SK-N-SH (cell line): ENCODE measurements at regions of chr7 and their contacts with region 1.

Region 1: DNA sequence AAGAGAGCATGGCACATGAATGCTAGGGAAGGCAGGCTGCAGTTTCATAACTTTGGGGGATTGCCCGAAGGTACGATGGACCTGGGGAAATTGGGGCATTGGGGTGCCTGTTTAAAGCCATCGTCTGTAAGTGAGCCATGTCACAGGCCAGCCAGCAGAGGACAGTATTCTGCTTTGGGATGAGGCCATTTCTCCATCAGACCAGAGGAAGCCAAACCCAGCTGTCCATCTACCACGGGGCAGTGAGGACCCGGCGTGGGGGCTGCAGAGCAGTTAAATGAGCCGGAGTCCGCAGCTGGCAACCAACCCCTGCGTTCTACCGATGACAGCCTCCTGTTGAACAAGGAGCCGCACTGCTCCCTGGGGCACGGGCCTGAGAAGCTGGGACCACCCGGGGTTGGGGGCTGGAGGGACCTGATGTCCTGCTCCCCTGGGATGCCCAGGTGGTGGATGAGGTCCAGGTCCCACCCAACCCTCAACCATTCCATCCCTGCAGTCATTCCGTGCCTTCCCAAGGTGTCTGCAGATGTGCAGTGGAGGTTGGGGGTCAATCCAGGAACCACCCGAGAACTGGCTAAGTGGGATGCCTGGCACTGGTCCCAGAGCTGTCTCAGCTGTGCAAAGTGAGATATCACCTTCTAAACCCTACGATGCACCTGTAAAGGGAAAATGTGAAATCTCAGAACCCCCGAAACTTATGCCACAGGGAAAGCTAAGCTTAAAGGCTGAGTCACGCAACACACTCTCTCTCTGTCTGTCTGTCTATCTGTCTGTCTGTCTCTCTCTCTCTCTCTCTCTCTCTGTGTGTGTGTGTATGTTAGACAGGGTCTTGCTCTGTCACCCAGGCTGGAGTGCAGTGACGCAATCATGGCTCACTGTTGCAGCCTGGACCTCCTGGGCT is 12.1 kb upstream of the RHBDD2 start:
- DNase-seq: peak; percentile 86
- H3K4me3 ChIP-seq: no peak overlapping the region
- H3K27ac ChIP-seq: no peak overlapping the region
- H3K4me1 ChIP-seq: peaks cover 3 to 6% of the 10 kb centered on the region in 2 experiments; a peak in 1 of 4 replicates
- H3K27me3 ChIP-seq: no peaks in the 10 kb centered on the region
- CTCF ChIP-seq: peak; percentile 97
- EP300 ChIP-seq: no peak
- RAD21 ChIP-seq: peak; percentile 97

Region 2: GRCh38 chr7:75842836-75843446 is 23.8 kb before region 1 on chr7:
- CTCF ChIA-PET with region 1: interaction called, 12 read pairs
- POLR2A ChIA-PET with region 1: no interaction called
- DNase-seq: no peak
- H3K4me3 ChIP-seq: no peak overlapping the region
- H3K27ac ChIP-seq: no peak overlapping the region
- H3K4me1 ChIP-seq: peaks cover 2 to 9% of the 10 kb centered on the region in 2 experiments; a peak in 1 of 4 replicates
- H3K27me3 ChIP-seq: peaks cover 12% of the 10 kb centered on the region
- CTCF ChIP-seq: no peak
- EP300 ChIP-seq: no peak
- RAD21 ChIP-seq: no peak

Region 3: DNA sequence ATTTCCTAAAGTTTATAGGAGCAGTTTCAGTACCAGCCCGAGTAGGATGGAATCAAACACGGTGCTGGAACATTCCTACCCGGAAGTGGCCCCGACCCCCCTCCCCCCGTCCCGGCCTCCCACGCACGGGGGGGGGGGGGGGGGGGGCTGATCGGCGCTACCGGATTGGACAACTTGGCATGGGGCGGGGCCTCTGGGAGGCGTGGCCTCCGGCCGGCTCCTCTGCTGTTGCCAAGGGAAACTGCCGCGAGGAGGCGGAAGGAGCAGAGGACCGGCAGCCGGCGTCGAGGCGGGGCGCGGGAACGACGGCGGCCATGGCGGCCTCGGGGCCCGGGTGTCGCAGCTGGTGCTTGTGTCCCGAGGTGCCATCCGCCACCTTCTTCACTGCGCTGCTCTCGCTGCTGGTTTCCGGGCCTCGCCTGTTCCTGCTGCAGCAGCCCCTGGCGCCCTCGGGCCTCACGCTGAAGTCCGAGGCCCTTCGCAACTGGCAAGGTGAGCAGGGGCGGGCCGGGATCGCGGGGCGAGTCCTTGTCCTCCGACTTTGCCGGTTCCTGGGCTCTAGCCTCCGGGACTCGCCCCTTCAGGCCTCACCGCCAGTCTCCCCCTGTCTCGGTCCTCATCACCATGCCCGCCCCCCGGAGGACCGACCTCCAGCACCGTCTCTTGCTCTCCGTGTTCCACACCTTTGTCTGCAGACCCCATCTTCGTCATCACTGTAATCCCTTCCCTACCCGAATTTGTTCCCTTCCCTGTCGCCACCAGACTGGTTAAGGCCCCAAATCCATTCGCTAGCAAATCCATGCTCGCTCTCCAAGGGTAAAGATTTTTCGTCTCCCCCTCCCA is 12.3 kb after region 1 on chr7 and contains the start of gene RHBDD2:
- CTCF ChIA-PET with region 1: interaction called, 28 read pairs
- POLR2A ChIA-PET with region 1: interaction called, 3 read pairs
- DNase-seq: peak; percentile 100
- H3K4me3 ChIP-seq: peak within 1 kb of the TSS; percentile 73 to 88
- H3K27ac ChIP-seq: peak within 1 kb of the TSS; percentile 65 to 91
- H3K4me1 ChIP-seq: peaks cover 6 to 10% of the 10 kb centered on the region in 2 experiments; a peak in 3 of 4 replicates
- H3K27me3 ChIP-seq: no peaks in the 10 kb centered on the region
- CTCF ChIP-seq: no peak
- EP300 ChIP-seq: peak in 1 of 2 experiments; percentile 58; a peak in 2 of 4 replicates
- RAD21 ChIP-seq: peak; percentile 18; the same call in 1 of the 2 replicates
- polyA plus RNA-seq, gene RHBDD2: 68.8 and 77.6 TPM in 2 replicates

Region 4: GRCh38 chr7:75914730-75915585 is 48.2 kb after region 1 on chr7 and contains the start of gene POR:
- CTCF ChIA-PET with region 1: interaction called, 10 read pairs
- POLR2A ChIA-PET with region 1: interaction called, 5 read pairs
- DNase-seq: peak; percentile 100
- H3K4me3 ChIP-seq: peak within 1 kb of the TSS; percentile 74 to 93
- H3K27ac ChIP-seq: peak within 1 kb of the TSS; percentile 57 to 79
- H3K4me1 ChIP-seq: peaks cover 5 to 10% of the 10 kb centered on the region in 2 experiments; a peak in 2 of 4 replicates
- H3K27me3 ChIP-seq: no peaks in the 10 kb centered on the region
- CTCF ChIP-seq: no peak; the same call in 1 of the 2 replicates
- EP300 ChIP-seq: peak; percentile 38 to 86; a peak in 1 of 4 replicates
- RAD21 ChIP-seq: no peak
- polyA plus RNA-seq, gene POR: 55.8 and 68.7 TPM in 2 replicates

Region 5: DNA sequence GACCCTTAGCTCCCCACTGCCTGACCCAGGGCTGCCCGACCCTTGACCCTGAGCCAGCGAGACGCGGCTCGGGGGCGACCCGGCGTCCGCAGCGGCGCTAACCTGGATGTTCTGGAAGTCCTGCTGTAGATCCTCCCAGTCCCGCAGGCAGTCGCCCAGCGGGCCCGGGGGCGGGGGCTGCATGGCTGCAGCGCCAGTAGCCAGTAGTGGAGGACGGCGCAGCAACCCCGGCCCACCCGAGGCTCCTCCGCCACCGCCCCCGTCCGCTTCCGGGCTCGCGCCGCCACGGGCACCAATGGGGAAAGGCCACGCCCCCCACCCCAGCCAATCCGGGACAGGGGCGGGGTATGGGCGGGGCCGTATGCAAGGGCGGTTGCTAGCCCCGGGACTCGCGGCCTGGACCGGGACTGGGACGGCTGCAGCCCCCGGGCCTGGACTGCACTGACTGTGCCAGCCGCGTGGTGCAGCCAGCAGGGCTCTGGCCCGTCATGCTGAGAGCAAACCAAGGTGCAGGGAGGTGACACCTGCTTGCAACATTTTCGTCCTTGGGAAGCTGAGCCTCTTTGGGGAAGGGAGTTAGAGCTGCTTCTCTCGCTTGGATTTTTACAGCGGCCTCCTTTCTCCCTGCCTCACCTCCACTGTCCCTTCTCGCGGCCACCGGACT is 127.8 kb after region 1 on chr7 and contains the start of gene TMEM120A:
- CTCF ChIA-PET with region 1: interaction called, 24 read pairs
- POLR2A ChIA-PET with region 1: interaction called, 3 read pairs
- DNase-seq: peak; percentile 100
- H3K4me3 ChIP-seq: peak within 1 kb of the TSS; percentile 69 to 84
- H3K27ac ChIP-seq: peak within 1 kb of the TSS; percentile 40 to 84; a peak in 3 of 4 replicates
- H3K4me1 ChIP-seq: peaks cover 6 to 20% of the 10 kb centered on the region in 2 experiments; a peak in 2 of 4 replicates
- H3K27me3 ChIP-seq: no peaks in the 10 kb centered on the region
- CTCF ChIP-seq: no peak
- EP300 ChIP-seq: peak in 1 of 2 experiments; percentile 22; a peak in 2 of 4 replicates
- RAD21 ChIP-seq: 0 out of 2 replicates have a peak, but pooled peaks have one; percentile 1
- polyA plus RNA-seq, gene TMEM120A: 59.8 and 95.2 TPM in 2 replicates

Region 6: GRCh38 chr7:76011442-76011861 is 144.7 kb after region 1 on chr7:
- CTCF ChIA-PET with region 1: interaction called, 34 read pairs
- POLR2A ChIA-PET with region 1: interaction called, 5 read pairs
- DNase-seq: no peak
- H3K4me3 ChIP-seq: no peak overlapping the region
- H3K27ac ChIP-seq: no peak overlapping the region
- H3K4me1 ChIP-seq: no peaks in the 10 kb centered on the region; a peak in 1 of 4 replicates
- H3K27me3 ChIP-seq: no peaks in the 10 kb centered on the region
- CTCF ChIP-seq: no peak
- EP300 ChIP-seq: no peak
- RAD21 ChIP-seq: no peak